Caco-2 (cell line): ENCODE measurements at regions of chr21 and their contacts with region 1.

Region 1: DNA sequence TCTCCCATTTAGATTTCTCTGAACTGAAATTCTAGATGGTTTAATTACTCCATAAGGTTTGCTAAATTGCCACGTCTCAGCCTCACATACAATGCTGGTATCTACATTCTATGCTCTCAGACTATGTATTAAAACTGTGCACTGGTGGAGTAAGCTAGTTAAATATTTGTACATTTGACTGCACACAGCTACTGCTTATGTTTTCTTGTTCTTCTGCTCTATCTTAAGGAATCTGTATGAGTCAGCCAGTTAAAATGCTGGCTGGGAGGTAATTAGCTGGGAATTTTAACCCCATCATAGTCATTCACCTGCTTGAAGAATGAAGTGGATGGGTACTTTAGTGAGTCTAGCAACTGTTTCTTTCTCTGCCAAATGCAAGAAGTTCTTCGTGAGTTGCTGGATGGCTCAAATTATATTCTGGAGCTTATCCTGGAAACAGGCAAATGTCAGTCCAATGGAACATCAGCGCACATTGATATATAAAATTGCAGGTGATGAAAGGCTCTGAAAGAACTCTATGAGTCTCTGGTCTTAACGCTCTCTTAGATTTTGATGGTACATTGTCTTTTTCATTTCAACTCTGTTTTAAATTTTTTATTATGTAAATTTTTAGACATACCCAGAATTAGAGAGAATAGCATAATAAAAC is 83.4 kb downstream of the BACH1 start:
- DNase-seq: peak; percentile 42 to 55
- H3K4me3 ChIP-seq: no peak overlapping the region
- H3K4me3 Mint-ChIP-seq: peak overlapping the region; percentile 51
- H3K27ac Mint-ChIP-seq: peak overlapping the region; percentile 81
- H3K4me1 ChIP-seq: peaks cover 57% of the 10 kb centered on the region
- H3K4me1 Mint-ChIP-seq: peaks cover 15% of the 10 kb centered on the region
- H3K27me3 ChIP-seq: no peaks in the 10 kb centered on the region
- H3K27me3 Mint-ChIP-seq: no peaks in the 10 kb centered on the region
- CTCF ChIP-seq: no peak

Region 2: GRCh38 chr21:29423099-29423498 is 41.0 kb after region 1 on chr21:
- CTCF ChIA-PET with region 1: no interaction called
- POLR2A ChIA-PET with region 1: no interaction called
- intact Hi-C with region 1: loop called (anchors 5 kb)
- DNase-seq: peak in 1 of 2 experiments; percentile 19
- H3K4me3 ChIP-seq: no peak overlapping the region
- H3K4me3 Mint-ChIP-seq: no peak overlapping the region
- H3K27ac Mint-ChIP-seq: no peak overlapping the region
- H3K4me1 ChIP-seq: peaks cover 8% of the 10 kb centered on the region; the same call in 1 of the 2 replicates
- H3K4me1 Mint-ChIP-seq: peaks cover 7% of the 10 kb centered on the region
- H3K27me3 ChIP-seq: no peaks in the 10 kb centered on the region
- H3K27me3 Mint-ChIP-seq: no peaks in the 10 kb centered on the region
- CTCF ChIP-seq: no peak

Region 3: DNA sequence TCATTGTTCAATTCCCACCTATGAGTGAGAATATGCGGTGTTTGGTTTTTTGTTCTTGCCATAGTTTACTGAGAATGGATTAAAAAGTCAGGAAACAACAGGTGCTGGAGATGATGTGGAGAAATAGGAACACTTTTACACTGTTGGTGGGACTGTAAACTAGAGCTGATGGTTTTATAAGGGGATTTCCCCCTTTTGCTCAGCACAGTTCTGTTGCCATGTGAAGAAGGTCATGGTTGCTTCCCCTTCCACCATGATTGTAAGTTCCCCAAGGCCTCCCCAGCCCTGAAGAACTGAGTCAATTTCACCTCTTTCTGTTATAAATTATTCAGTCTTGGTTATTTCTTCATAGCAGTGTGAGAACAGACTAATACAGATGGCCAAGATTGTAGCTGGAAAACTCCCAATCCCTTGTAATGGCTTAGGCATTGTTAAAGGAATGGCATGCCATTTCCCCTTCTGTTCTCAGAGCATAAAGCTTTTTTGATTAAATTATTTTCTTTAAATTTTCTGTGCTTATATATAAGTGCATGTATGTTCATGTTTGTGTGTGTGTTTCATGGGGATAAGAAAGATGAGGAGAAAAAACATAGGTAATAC is 61.4 kb after region 1 on chr21:
- CTCF ChIA-PET with region 1: no interaction called
- POLR2A ChIA-PET with region 1: no interaction called
- intact Hi-C with region 1: loop called (anchors 5 kb)
- DNase-seq: no peak
- H3K4me3 ChIP-seq: no peak overlapping the region
- H3K4me3 Mint-ChIP-seq: no peak overlapping the region
- H3K27ac Mint-ChIP-seq: no peak overlapping the region
- H3K4me1 ChIP-seq: peaks cover 15% of the 10 kb centered on the region
- H3K4me1 Mint-ChIP-seq: peaks cover 13% of the 10 kb centered on the region
- H3K27me3 ChIP-seq: no peaks in the 10 kb centered on the region
- H3K27me3 Mint-ChIP-seq: no peaks in the 10 kb centered on the region
- CTCF ChIP-seq: no peak